Calu3 (cell line): ENCODE measurements at regions of chr11 and their contacts with region 1.

Region 1: DNA sequence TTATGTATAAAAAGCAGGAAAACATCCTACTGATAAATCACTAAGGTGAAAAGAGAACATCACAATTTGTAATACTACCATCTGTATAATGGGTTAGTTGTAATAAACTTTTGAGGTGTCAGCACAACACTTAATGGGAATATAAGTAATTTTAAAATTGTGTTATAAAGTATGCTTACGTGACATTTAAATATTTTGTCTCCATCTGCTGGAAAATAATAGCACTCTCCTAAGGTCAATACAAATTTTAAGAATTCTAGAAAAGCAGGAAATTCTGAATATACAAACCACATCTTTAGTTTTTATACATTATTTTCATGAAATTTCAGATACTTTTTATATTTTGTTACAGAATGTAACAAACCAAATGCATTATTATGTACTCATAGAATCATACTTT is 19.5 kb downstream of the CWF19L2 start:
- DNase-seq: no peak
- H3K4me3 Mint-ChIP-seq: no peak overlapping the region
- H3K27ac Mint-ChIP-seq: no peak overlapping the region
- H3K4me1 Mint-ChIP-seq: no peaks in the 10 kb centered on the region
- H3K27me3 Mint-ChIP-seq: no peaks in the 10 kb centered on the region
- CTCF ChIP-seq: no peak

Region 2: GRCh38 chr11:107116358-107116757 is 321.8 kb before region 1 on chr11:
- CTCF ChIA-PET with region 1: no interaction called
- intact Hi-C with region 1: no loop called
- DNase-seq: no peak
- H3K4me3 Mint-ChIP-seq: no peak overlapping the region
- H3K27ac Mint-ChIP-seq: no peak overlapping the region
- H3K4me1 Mint-ChIP-seq: no peaks in the 10 kb centered on the region
- H3K27me3 Mint-ChIP-seq: no peaks in the 10 kb centered on the region
- CTCF ChIP-seq: no peak

Region 3: DNA sequence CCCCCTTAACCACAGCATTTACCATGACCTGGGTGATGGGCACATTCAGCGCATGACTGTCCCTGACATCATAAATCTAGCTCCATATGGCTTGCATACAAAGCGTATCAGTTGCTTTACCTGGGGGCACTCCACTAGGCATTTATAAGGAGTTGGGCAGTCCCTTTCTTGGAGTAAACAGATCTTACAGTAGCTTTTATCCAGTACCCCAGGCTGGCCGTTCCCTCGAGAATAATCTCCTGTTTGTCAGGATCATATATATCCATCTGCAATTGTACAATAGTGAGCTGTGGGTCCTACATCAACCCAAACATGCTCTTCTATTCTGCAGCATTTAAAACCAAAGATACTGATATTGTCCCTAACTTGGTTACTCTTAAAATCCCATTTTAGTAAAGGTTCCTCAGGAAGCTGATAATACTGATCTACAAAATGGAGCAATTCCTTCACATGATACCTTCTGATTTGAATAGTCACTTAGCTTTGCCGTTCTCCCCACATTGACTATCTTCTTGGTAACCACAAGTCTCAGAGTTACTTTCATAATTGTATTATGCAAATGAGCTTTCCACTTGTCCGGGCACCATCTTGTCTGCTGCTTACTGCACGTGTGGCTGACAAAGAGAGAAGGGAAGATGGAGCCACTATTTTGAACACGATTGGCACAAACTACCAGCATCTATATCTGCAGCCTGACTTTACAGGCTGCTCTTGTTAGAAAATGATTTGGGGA is 185.6 kb before region 1 on chr11:
- CTCF ChIA-PET with region 1: no interaction called
- intact Hi-C with region 1: loop called (anchors 10 kb)
- DNase-seq: no peak
- H3K4me3 Mint-ChIP-seq: no peak overlapping the region
- H3K27ac Mint-ChIP-seq: no peak overlapping the region
- H3K4me1 Mint-ChIP-seq: peaks cover 9% of the 10 kb centered on the region
- H3K27me3 Mint-ChIP-seq: no peaks in the 10 kb centered on the region
- CTCF ChIP-seq: no peak